AG04449 (cell line): ENCODE measurements at regions of chr9 and their contacts with region 1.

Region 1: GRCh38 chr9:134175808-134176598 is 11.6 kb upstream of the RNU6ATAC start:
- DNase-seq: no peak
- H3K4me3 ChIP-seq: no peak overlapping the region
- CTCF ChIP-seq: peak; percentile 23

Region 2: GRCh38 chr9:133972041-133972941 is 203.7 kb before region 1 on chr9:
- CTCF ChIA-PET with region 1: no interaction called
- POLR2A ChIA-PET with region 1: no interaction called
- DNase-seq: no peak
- H3K4me3 ChIP-seq: no peak overlapping the region
- CTCF ChIP-seq: no peak

Region 3: GRCh38 chr9:134215699-134216448 is 39.9 kb after region 1 on chr9:
- CTCF ChIA-PET with region 1: interaction called, 10 read pairs
- POLR2A ChIA-PET with region 1: no interaction called
- DNase-seq: peak; percentile 71
- H3K4me3 ChIP-seq: no peak overlapping the region
- CTCF ChIP-seq: no peak

Region 4: GRCh38 chr9:134325817-134326723 is 150.1 kb after region 1 on chr9 and contains the start of gene RXRA:
- CTCF ChIA-PET with region 1: interaction called, 54 read pairs
- POLR2A ChIA-PET with region 1: interaction called, 7 read pairs
- DNase-seq: peak; percentile 47
- H3K4me3 ChIP-seq: peak within 1 kb of the TSS; percentile 72
- CTCF ChIP-seq: peak; percentile 72

Region 5: GRCh38 chr9:134360897-134361296 is 184.9 kb after region 1 on chr9:
- CTCF ChIA-PET with region 1: interaction called, 20 read pairs
- POLR2A ChIA-PET with region 1: no interaction called
- DNase-seq: no peak
- H3K4me3 ChIP-seq: no peak overlapping the region
- CTCF ChIP-seq: no peak

Region 6: DNA sequence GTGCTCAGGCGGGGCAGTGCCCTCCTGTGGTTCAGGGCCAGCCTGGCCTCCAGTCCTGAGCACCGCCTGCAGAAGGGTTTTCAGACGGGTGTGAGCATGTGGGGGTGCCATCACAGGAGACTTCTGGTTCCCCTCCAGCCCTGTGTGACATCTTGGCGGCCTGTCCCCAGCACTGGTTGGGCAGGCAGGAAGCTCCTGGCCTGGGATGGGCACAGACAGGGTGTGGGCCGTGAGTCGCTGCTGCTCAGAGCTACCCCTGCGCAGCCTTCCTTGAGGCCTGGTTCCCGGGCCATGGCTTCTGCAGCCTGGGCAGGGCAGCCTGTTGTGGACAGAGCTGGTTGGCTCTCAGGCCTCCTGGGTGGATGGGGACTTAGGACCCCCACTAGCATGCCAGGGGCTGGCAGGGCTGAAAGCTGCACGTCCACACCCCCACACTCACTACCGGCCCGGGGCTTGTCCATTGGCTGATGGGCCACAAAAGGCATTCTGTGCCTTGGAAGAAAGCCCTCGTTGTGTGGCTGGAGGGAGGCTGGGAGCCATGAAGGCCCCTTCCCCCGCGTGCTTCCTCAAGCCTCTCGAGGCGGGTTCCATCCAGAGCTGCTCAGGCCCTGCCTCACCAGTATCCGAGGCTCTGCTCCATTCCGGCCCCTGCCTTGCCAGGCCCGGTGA is 208.9 kb after region 1 on chr9:
- CTCF ChIA-PET with region 1: interaction called, 11 read pairs
- POLR2A ChIA-PET with region 1: no interaction called
- DNase-seq: no peak
- H3K4me3 ChIP-seq: no peak overlapping the region
- CTCF ChIP-seq: no peak

Region 7: GRCh38 chr9:134413890-134414731 is 238.1 kb after region 1 on chr9:
- CTCF ChIA-PET with region 1: interaction called, 19 read pairs
- POLR2A ChIA-PET with region 1: no interaction called
- DNase-seq: peak; percentile 29
- H3K4me3 ChIP-seq: no peak overlapping the region
- CTCF ChIP-seq: no peak

Region 8: DNA sequence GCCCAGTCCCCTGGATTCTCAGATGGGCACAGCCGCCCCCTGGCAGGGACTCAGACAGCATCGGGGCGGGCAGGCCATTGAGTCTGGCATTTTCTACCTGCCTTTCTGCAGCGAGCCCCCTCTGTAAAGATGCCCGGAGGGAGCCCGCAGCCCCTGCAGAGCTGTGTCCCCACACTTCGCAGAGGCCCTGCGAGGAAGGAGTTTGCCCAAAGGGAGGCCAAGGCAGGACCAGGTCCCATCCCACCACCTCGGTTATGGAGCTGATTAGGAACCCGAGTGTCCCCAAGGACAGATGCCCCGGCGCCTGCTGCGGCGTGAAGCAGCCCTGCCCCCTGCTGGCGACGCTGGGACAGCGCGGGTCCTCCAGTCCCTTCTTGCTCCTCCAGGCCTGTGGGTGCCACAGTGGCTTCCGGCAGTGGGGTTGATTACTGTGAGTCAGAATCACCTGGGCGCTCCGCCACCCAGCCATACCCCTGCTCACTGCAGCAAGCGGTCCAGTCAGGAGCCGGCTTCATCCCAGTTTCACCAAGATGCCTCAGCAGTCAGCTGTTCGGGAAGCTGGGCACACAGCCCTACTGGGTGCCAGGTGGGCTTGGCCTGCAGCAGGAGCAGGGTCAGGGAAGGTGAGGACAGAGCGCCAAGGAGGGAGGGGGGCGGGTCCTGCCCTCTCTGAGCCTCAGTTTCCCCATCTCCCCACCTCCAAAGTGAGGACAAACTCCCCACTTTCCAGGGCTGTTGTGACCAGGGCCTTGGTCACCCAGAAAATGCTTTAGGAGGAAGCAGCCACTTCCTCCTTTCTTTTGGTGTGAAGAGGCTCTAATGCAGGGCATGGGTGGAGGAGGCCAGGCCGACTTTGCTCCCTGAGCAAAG is 267.4 kb after region 1 on chr9:
- CTCF ChIA-PET with region 1: interaction called, 256 read pairs
- POLR2A ChIA-PET with region 1: interaction called, 13 read pairs
- DNase-seq: peak; percentile 40
- H3K4me3 ChIP-seq: no peak overlapping the region
- CTCF ChIP-seq: peak; percentile 99